ENCODE measurements at regions of chr6 and their contacts with region 1.

Region 1: DNA sequence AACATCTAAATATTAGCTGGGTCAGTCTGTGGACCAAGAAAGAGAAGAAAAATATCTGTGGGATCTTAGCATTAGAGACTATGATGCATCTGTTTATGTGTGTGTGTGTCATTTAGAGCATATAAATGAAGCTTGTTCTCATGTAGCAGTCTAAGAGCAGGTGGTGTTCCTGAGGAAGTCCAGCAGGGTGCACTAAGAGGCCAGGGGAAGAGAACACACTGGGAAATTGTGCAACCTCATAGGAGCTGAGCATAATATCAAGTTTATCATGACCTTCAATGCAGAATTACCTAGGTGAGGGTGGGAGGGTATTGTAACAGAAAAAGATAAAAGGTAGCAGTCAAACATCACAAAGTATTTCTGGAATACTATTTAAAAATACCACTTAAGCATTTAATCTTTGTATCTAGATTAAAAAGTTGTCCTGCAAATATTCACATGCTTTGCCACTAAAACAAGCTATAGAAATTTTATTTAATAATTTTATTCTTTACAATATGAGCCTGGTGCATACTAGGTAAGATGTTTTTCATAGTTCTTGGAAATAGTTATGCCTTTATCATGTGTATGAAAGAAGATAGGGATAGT is 80.5 kb downstream of the SMPDL3A start:
- DNase-seq: peak; percentile 50
- H3K4me3 ChIP-seq: no peak overlapping the region
- H3K4me3 Mint-ChIP-seq: no peak overlapping the region
- H3K27ac Mint-ChIP-seq: no peak overlapping the region
- H3K4me1 ChIP-seq: no peaks in the 10 kb centered on the region
- H3K4me1 Mint-ChIP-seq: no peaks in the 10 kb centered on the region
- H3K27me3 ChIP-seq: no peaks in the 10 kb centered on the region; the same call in 1 of the 2 replicates
- H3K27me3 Mint-ChIP-seq: peaks cover 3% of the 10 kb centered on the region
- CTCF ChIP-seq: peak; percentile 71 to 75

Region 2: DNA sequence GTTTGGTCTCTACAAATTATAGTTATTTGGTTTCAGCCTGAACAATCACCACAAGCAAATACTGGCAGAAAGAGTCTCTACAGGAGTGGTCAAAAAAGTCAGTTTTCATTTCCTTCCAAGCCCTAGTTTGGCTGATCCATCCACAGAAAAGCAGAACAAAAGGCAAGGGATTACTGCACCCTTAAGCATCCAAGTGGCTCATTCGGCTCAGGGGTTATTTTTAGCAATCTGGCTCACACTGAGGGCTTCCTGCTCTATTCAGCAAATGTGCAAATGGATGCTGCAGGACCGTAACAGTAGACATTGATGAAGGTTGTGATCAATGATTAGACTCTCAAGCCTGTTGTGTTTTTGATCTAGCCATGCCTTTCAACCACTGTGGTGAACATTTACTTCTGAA is 152.2 kb before region 1 on chr6:
- CTCF ChIA-PET with region 1: no interaction called
- POLR2A ChIA-PET with region 1: no interaction called
- intact Hi-C with region 1: no loop called
- DNase-seq: no peak
- H3K4me3 ChIP-seq: no peak overlapping the region
- H3K4me3 Mint-ChIP-seq: no peak overlapping the region
- H3K27ac Mint-ChIP-seq: no peak overlapping the region
- H3K4me1 ChIP-seq: no peaks in the 10 kb centered on the region
- H3K4me1 Mint-ChIP-seq: no peaks in the 10 kb centered on the region
- H3K27me3 ChIP-seq: no peaks in the 10 kb centered on the region
- H3K27me3 Mint-ChIP-seq: no peaks in the 10 kb centered on the region
- CTCF ChIP-seq: no peak

Region 3: GRCh38 chr6:122947355-122947754 is 77.8 kb after region 1 on chr6:
- CTCF ChIA-PET with region 1: interaction called, 5 read pairs
- POLR2A ChIA-PET with region 1: no interaction called
- intact Hi-C with region 1: loop called (anchors 5 kb)
- DNase-seq: peak in 1 of 2 experiments; percentile 27
- H3K4me3 ChIP-seq: no peak overlapping the region
- H3K4me3 Mint-ChIP-seq: no peak overlapping the region
- H3K27ac Mint-ChIP-seq: no peak overlapping the region
- H3K4me1 ChIP-seq: no peaks in the 10 kb centered on the region
- H3K4me1 Mint-ChIP-seq: no peaks in the 10 kb centered on the region
- H3K27me3 ChIP-seq: no peaks in the 10 kb centered on the region
- H3K27me3 Mint-ChIP-seq: peaks cover 7% of the 10 kb centered on the region
- CTCF ChIP-seq: peak; percentile 26 to 63

Region 4: DNA sequence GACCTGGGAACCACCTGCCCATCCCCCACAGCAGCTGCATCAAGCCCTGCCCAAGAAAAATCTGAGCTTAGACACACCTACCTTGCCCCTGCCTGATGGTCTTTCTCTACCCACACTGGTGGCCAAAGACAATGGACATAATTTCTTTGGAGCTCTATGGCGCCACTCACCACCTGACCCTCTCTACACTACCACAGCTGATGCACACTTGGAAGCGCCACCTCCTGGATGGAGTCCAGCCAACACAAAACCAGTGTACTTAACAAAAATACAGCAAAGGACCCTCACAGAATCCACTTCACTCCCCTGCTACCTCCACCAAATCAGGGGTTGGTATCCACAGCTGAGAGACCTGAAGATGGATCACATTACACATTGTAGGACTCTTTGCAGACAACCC is 86.8 kb after region 1 on chr6:
- CTCF ChIA-PET with region 1: no interaction called
- POLR2A ChIA-PET with region 1: no interaction called
- intact Hi-C with region 1: loop called (anchors 1 kb)
- DNase-seq: no peak
- H3K4me3 ChIP-seq: no peak overlapping the region
- H3K4me3 Mint-ChIP-seq: no peak overlapping the region
- H3K27ac Mint-ChIP-seq: no peak overlapping the region
- H3K4me1 ChIP-seq: no peaks in the 10 kb centered on the region
- H3K4me1 Mint-ChIP-seq: no peaks in the 10 kb centered on the region
- H3K27me3 ChIP-seq: no peaks in the 10 kb centered on the region
- H3K27me3 Mint-ChIP-seq: no peaks in the 10 kb centered on the region
- CTCF ChIP-seq: no peak

Region 5: GRCh38 chr6:123316733-123317323 is 447.3 kb after region 1 on chr6:
- CTCF ChIA-PET with region 1: interaction called, 5 read pairs
- POLR2A ChIA-PET with region 1: no interaction called
- intact Hi-C with region 1: loop called (anchors 1 kb)
- DNase-seq: no peak
- H3K4me3 ChIP-seq: no peak overlapping the region
- H3K4me3 Mint-ChIP-seq: no peak overlapping the region
- H3K27ac Mint-ChIP-seq: no peak overlapping the region
- H3K4me1 ChIP-seq: no peaks in the 10 kb centered on the region
- H3K4me1 Mint-ChIP-seq: no peaks in the 10 kb centered on the region
- H3K27me3 ChIP-seq: no peaks in the 10 kb centered on the region
- H3K27me3 Mint-ChIP-seq: peaks cover under 1% of the 10 kb centered on the region
- CTCF ChIP-seq: peak; percentile 15 to 55

Region 6: DNA sequence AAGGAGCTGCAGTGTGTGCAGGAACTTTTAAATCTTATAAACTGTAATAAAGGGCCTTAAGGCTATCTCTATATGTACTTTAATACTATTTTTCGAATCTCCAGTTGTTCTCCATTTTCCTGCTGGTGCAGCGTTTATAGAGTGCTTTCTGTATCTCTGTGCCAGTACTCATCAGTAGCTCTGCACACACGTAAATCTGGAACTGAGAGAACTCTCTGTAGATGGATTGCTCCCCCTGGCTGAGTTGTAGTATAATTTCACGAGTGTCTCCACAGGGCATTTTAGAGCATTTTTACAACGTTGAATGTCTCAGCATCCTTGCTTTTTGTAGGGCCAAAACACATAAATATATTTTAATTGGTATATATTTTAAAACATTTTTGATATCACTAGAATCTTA is 510.7 kb after region 1 on chr6:
- CTCF ChIA-PET with region 1: interaction called, 22 read pairs
- POLR2A ChIA-PET with region 1: no interaction called
- intact Hi-C with region 1: loop called (anchors 1 kb)
- DNase-seq: peak in 1 of 2 experiments; percentile 28
- H3K4me3 ChIP-seq: no peak overlapping the region
- H3K4me3 Mint-ChIP-seq: no peak overlapping the region
- H3K27ac Mint-ChIP-seq: no peak overlapping the region
- H3K4me1 ChIP-seq: no peaks in the 10 kb centered on the region
- H3K4me1 Mint-ChIP-seq: no peaks in the 10 kb centered on the region
- H3K27me3 ChIP-seq: no peaks in the 10 kb centered on the region
- H3K27me3 Mint-ChIP-seq: no peaks in the 10 kb centered on the region
- CTCF ChIP-seq: peak in 1 of 2 experiments; percentile 54

Region 7: DNA sequence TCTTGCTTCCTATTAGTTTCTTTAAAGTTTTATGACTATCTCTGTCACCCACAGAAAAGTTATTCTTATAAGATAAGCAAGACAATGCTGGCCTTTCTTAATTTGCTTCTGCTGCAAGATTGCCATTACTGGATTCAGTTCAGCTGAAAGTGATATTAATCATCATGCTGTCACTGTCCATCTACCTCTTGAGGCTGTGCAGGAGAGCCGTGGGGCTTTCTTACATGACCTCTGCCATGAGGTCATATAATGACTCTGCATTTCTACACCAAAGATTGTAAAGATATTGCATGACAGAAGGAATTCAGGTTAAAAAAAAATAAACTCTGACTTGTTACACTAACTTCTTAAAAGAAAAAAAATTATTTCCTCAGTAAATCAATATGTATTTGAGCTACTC is 660.3 kb after region 1 on chr6:
- CTCF ChIA-PET with region 1: interaction called, 10 read pairs
- POLR2A ChIA-PET with region 1: no interaction called
- intact Hi-C with region 1: no loop called
- DNase-seq: no peak
- H3K4me3 ChIP-seq: no peak overlapping the region
- H3K4me3 Mint-ChIP-seq: no peak overlapping the region
- H3K27ac Mint-ChIP-seq: no peak overlapping the region
- H3K4me1 ChIP-seq: no peaks in the 10 kb centered on the region
- H3K4me1 Mint-ChIP-seq: no peaks in the 10 kb centered on the region
- H3K27me3 ChIP-seq: no peaks in the 10 kb centered on the region
- H3K27me3 Mint-ChIP-seq: no peaks in the 10 kb centered on the region
- CTCF ChIP-seq: no peak

Region 8: DNA sequence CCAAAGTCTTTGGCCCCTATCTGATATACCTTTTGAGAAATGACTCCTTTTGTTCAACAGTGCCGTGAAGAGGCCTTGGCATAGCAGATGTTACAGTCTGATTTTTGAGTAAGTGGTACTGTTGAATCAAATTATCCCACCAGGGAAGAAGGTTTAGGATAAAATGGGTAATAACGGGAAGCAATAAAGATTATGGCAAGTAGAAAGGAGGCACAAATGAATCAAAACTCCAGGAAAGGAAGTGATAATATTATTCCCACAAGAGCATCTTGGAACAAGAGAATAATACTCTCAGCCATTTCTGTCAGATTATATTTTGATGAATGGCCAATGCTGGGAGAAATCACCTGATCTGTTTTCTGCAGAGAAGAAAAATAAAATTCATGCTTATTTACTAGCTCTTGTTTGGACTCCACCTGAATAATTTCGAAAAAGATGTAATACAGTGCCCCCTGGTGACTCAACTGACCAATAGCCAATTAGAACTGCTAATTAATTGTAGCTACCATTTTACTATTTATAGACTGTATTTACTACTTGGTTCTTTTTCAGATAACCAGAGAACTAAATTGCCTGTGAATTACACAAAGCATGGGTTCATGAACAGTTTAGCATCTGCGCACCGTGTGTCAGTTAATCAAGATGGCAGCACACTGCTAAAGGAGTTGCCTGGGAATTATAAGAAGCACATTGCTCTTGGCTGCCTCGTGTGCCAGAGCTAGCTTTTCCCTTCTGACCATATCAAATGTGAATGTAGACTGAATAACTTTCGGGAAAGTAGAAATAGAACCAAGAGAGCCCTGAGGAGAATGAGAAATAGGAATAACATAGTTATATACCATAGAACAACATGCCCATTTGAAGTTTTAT is 845.7 kb after region 1 on chr6:
- CTCF ChIA-PET with region 1: interaction called, 8 read pairs
- POLR2A ChIA-PET with region 1: no interaction called
- intact Hi-C with region 1: loop called (anchors 1 kb)
- DNase-seq: peak in 1 of 2 experiments; percentile 38
- H3K4me3 ChIP-seq: no peak overlapping the region
- H3K4me3 Mint-ChIP-seq: no peak overlapping the region
- H3K27ac Mint-ChIP-seq: no peak overlapping the region
- H3K4me1 ChIP-seq: no peaks in the 10 kb centered on the region
- H3K4me1 Mint-ChIP-seq: no peaks in the 10 kb centered on the region
- H3K27me3 ChIP-seq: no peaks in the 10 kb centered on the region; the same call in 1 of the 2 replicates
- H3K27me3 Mint-ChIP-seq: peaks cover 7% of the 10 kb centered on the region
- CTCF ChIP-seq: peak; percentile 37 to 39